Stomach (tissue), 19 donors: ENCODE measurements at regions of chr3 and their contacts with region 1.

Region 1: DNA sequence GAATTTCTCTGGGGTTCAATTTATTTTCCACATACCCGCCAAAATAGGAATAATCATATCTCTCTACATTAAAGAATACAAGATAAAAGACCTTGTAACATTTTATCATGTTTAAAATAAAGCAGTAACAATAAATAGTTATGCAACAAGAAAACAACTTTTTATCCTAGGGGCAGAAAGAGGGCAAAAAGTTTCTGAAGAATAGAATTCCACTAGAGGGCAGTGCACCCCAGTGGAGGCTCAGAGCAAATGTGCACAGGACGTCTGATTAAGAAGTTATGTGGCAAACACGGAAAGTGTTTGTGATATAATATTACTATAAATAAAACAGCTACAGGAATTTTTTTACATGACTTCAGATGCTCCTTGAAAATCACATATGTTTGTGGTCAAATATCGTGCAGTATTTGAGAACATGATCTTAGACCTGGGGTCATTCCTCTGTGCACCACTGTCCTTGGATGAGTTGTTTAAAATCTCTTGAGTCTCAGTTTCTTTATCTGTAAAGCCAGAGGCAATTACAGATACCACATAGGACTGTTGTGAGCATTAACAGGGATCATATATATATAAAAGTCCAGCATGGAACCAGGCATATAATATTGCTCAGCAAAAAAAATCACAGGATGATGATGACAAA is 13.2 kb upstream of the PIK3R4 start:
- DNase-seq: peak; percentile 62 to 83
- H3K4me3 ChIP-seq: no peak overlapping the region
- H3K27ac ChIP-seq: no peak overlapping the region
- H3K4me1 ChIP-seq: peaks cover 0 to 9% (median 4%) of the 10 kb centered on the region in 4 donors
- H3K27me3 ChIP-seq: no peaks in the 10 kb centered on the region
- CTCF ChIP-seq: peak in 5 of 7 experiments; percentile 49 to 80 (median 76)
- EP300 ChIP-seq: no peak
- POLR2A ChIP-seq: no peak

Region 2: GRCh38 chr3:130889416-130889946 is 129.7 kb after region 1 on chr3:
- intact Hi-C with region 1: loop called (anchors 5 kb)
- DNase-seq: no peak
- H3K4me3 ChIP-seq: no peak overlapping the region
- H3K27ac ChIP-seq: no peak overlapping the region
- H3K4me1 ChIP-seq: peaks cover 2 to 7% (median 5%) of the 10 kb centered on the region in 4 donors
- H3K27me3 ChIP-seq: no peaks in the 10 kb centered on the region
- CTCF ChIP-seq: no peak
- EP300 ChIP-seq: no peak
- POLR2A ChIP-seq: no peak